Stomach (tissue), 19 donors: ENCODE measurements at regions of chr14 and their contacts with region 1.

Region 1: GRCh38 chr14:22472935-22473854 is 115.8 kb downstream of the DAD1 start:
- DNase-seq: peak; percentile 63 to 79
- H3K4me3 ChIP-seq: no peak overlapping the region
- H3K27ac ChIP-seq: no peak overlapping the region
- H3K4me1 ChIP-seq: peaks cover 5 to 32% (median 19%) of the 10 kb centered on the region in 4 donors
- H3K27me3 ChIP-seq: no peaks in the 10 kb centered on the region
- CTCF ChIP-seq: peak in 5 of 7 experiments; percentile 24 to 63 (median 56)
- EP300 ChIP-seq: no peak
- POLR2A ChIP-seq: no peak

Region 2: GRCh38 chr14:22220427-22220826 is 252.8 kb before region 1 on chr14:
- intact Hi-C with region 1: no loop called
- DNase-seq: peak in 1 of 2 donors; percentile 16
- H3K4me3 ChIP-seq: no peak overlapping the region
- H3K27ac ChIP-seq: no peak overlapping the region
- H3K4me1 ChIP-seq: no peaks in the 10 kb centered on the region
- H3K27me3 ChIP-seq: peaks cover 0 to 5% (median 0%) of the 10 kb centered on the region in 3 donors
- CTCF ChIP-seq: no peak
- EP300 ChIP-seq: no peak
- POLR2A ChIP-seq: no peak

Region 3: GRCh38 chr14:22391912-22392421 is 81.2 kb before region 1 on chr14:
- intact Hi-C with region 1: loop called (anchors 5 kb)
- DNase-seq: peak; percentile 74 to 90
- H3K4me3 ChIP-seq: no peak overlapping the region
- H3K27ac ChIP-seq: peak overlapping the region in 1 of 5 donors; percentile 47
- H3K4me1 ChIP-seq: peaks cover 0 to 20% (median 4%) of the 10 kb centered on the region in 4 donors
- H3K27me3 ChIP-seq: no peaks in the 10 kb centered on the region
- CTCF ChIP-seq: peak in 5 of 7 experiments; percentile 46 to 88 (median 61)
- EP300 ChIP-seq: no peak
- POLR2A ChIP-seq: no peak